ENCODE measurements at regions of chr1 and their contacts with region 1.

Region 1: GRCh38 chr1:179121159-179121938 is 39.5 kb downstream of the TOR3A start:
- DNase-seq: peak; percentile 32 to 57 (median 34)
- H3K4me3 ChIP-seq: no peak overlapping the region
- H3K4me3 Mint-ChIP-seq: no peak overlapping the region
- H3K27ac ChIP-seq: no peak overlapping the region
- H3K27ac Mint-ChIP-seq: peak overlapping the region in 5 of 7 donors; percentile 39 to 83 (median 54)
- H3K4me1 ChIP-seq: no peaks in the 10 kb centered on the region
- H3K4me1 Mint-ChIP-seq: no peaks in the 10 kb centered on the region
- H3K27me3 ChIP-seq: no peaks in the 10 kb centered on the region
- H3K27me3 Mint-ChIP-seq: no peaks in the 10 kb centered on the region
- CTCF ChIP-seq: peak; percentile 73

Region 2: GRCh38 chr1:179190861-179191260 is 69.5 kb after region 1 on chr1:
- intact Hi-C with region 1: loop called (anchors 5 to 10 kb)
- DNase-seq: peak; percentile 48 to 91 (median 81)
- H3K4me3 ChIP-seq: peak overlapping the region; percentile 7 to 62 (median 15)
- H3K4me3 Mint-ChIP-seq: peak overlapping the region; percentile 61 to 75
- H3K27ac ChIP-seq: peak overlapping the region in 1 of 2 donors; percentile 57
- H3K27ac Mint-ChIP-seq: peak overlapping the region; percentile 56 to 85 (median 72)
- H3K4me1 ChIP-seq: peaks cover 12 to 25% of the 10 kb centered on the region in 2 donors
- H3K4me1 Mint-ChIP-seq: peaks cover 34% of the 10 kb centered on the region
- H3K27me3 ChIP-seq: no peaks in the 10 kb centered on the region
- H3K27me3 Mint-ChIP-seq: no peaks in the 10 kb centered on the region
- CTCF ChIP-seq: no peak

Region 3: GRCh38 chr1:179293340-179294327 is 172.3 kb after region 1 on chr1 and contains the start of gene SOAT1:
- intact Hi-C with region 1: loop called (anchors 5 kb)
- DNase-seq: peak; percentile 75 to 85 (median 83)
- H3K4me3 ChIP-seq: peak within 1 kb of the TSS; percentile 74 to 89 (median 88)
- H3K4me3 Mint-ChIP-seq: peak within 1 kb of the TSS; percentile 89 to 95
- H3K27ac ChIP-seq: peak within 1 kb of the TSS; percentile 87 to 88
- H3K27ac Mint-ChIP-seq: peak within 1 kb of the TSS; percentile 95 to 98 (median 97)
- H3K4me1 ChIP-seq: peaks cover 37 to 53% of the 10 kb centered on the region in 2 donors
- H3K4me1 Mint-ChIP-seq: peaks cover 50% of the 10 kb centered on the region
- H3K27me3 ChIP-seq: no peaks in the 10 kb centered on the region
- H3K27me3 Mint-ChIP-seq: peaks cover 0 to 2% (median 0%) of the 10 kb centered on the region in 3 donors
- CTCF ChIP-seq: peak; percentile 18
- polyA plus RNA-seq, gene SOAT1: 15.8 to 158 (median 105) TPM